ENCODE measurements at regions of chr2 and their contacts with region 1.

Region 1: GRCh38 chr2:136135921-136136906 is 18.3 kb upstream of the CXCR4 start:
- DNase-seq: peak; percentile 59
- H3K4me3 Mint-ChIP-seq: peak overlapping the region; percentile 17
- H3K27ac Mint-ChIP-seq: peak overlapping the region; percentile 60
- H3K4me1 Mint-ChIP-seq: peaks cover 82% of the 10 kb centered on the region
- H3K27me3 Mint-ChIP-seq: peaks cover 30% of the 10 kb centered on the region

Region 2: GRCh38 chr2:135664623-135665068 is 471.6 kb before region 1 on chr2:
- intact Hi-C with region 1: loop called (anchors 10 kb)
- DNase-seq: no peak
- H3K4me3 Mint-ChIP-seq: no peak overlapping the region
- H3K27ac Mint-ChIP-seq: peak overlapping the region; percentile 71
- H3K4me1 Mint-ChIP-seq: peaks cover 37% of the 10 kb centered on the region
- H3K27me3 Mint-ChIP-seq: no peaks in the 10 kb centered on the region

Region 3: GRCh38 chr2:135820003-135820618 is 316.1 kb before region 1 on chr2:
- intact Hi-C with region 1: loop called (anchors 5 kb)
- DNase-seq: peak; percentile 75
- H3K4me3 Mint-ChIP-seq: peak overlapping the region; percentile 80
- H3K27ac Mint-ChIP-seq: peak overlapping the region; percentile 89
- H3K4me1 Mint-ChIP-seq: peaks cover 52% of the 10 kb centered on the region
- H3K27me3 Mint-ChIP-seq: no peaks in the 10 kb centered on the region

Region 4: GRCh38 chr2:135913727-135914365 is 222.4 kb before region 1 on chr2:
- intact Hi-C with region 1: loop called (anchors 1 kb)
- DNase-seq: no peak
- H3K4me3 Mint-ChIP-seq: no peak overlapping the region
- H3K27ac Mint-ChIP-seq: no peak overlapping the region
- H3K4me1 Mint-ChIP-seq: peaks cover 27% of the 10 kb centered on the region
- H3K27me3 Mint-ChIP-seq: no peaks in the 10 kb centered on the region

Region 5: DNA sequence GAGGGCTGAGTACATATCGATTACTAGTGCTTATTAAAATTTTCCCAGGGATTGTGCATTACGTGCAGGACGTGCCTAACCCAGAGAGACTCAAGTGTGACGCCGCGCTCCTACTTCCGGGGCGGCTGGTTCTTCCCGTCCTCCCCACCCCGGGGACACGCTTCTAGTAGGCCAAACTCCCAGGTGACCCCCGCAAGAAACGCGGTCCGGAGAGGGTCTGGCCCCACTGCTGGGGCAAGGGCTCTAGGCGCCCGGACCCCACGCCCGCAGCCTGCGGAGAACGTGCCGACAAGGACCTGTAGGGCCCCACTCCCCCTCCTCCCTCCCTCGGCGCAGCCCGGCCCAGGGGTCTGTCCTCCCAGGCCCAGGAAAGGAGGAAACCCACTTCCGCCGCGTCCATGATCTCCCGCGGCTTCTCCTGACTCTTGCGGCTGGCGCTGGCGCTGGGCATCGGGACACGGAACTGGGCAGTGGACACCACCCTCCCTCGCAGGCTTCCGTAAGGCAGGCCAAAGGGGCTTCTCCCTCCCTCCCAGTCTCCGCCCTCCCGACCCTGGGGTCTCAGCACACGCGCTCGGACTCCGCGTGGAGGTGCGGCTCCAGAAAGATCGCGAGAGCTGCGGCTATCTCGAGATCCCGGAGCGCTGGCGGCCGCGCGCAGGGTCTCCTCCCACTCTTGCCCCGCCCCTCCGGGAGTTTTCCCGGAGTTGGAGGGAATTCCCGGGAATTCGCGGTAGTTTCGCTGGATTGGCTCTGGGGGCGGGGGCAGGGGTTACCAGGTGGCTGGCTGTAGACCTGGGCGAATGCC is 151.0 kb before region 1 on chr2 and contains the start of gene DARS1:
- intact Hi-C with region 1: loop called (anchors 1 kb)
- DNase-seq: peak; percentile 78
- H3K4me3 Mint-ChIP-seq: peak within 1 kb of the TSS; percentile 91
- H3K27ac Mint-ChIP-seq: peak within 1 kb of the TSS; percentile 97
- H3K4me1 Mint-ChIP-seq: peaks cover 62% of the 10 kb centered on the region
- H3K27me3 Mint-ChIP-seq: no peaks in the 10 kb centered on the region
- total RNA-seq, gene DARS1: 132 and 140 TPM in 2 replicates

Region 6: GRCh38 chr2:136238286-136239078 is 102.3 kb after region 1 on chr2:
- intact Hi-C with region 1: loop called (anchors 1 kb)
- DNase-seq: peak; percentile 12
- H3K4me3 Mint-ChIP-seq: peak overlapping the region; percentile 27
- H3K27ac Mint-ChIP-seq: peak overlapping the region; percentile 88
- H3K4me1 Mint-ChIP-seq: peaks cover 49% of the 10 kb centered on the region
- H3K27me3 Mint-ChIP-seq: no peaks in the 10 kb centered on the region

Region 7: GRCh38 chr2:136362676-136363390 is 226.6 kb after region 1 on chr2:
- intact Hi-C with region 1: loop called (anchors 1 kb)
- DNase-seq: no peak
- H3K4me3 Mint-ChIP-seq: peak overlapping the region; percentile 21
- H3K27ac Mint-ChIP-seq: peak overlapping the region; percentile 69
- H3K4me1 Mint-ChIP-seq: peaks cover 57% of the 10 kb centered on the region
- H3K27me3 Mint-ChIP-seq: peaks cover 4% of the 10 kb centered on the region

Region 8: DNA sequence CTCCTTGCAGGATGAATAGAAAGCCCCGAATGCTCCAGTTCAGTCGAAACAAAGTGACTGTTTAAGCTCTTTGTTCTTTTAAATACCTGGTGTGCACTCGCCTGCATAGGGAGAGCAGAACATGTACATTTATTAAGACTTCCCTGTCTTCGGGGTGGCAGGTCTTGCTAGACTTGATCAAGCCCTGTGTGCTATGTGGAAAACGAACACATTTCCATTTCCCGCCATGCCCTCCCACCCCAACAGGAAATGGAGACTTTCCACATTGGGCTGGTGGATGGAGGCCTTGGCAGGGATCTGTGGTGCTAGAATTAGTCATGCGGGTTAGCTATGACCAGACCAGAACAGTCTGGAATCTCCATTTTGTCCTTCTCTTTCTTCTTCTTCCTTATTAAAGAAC is 308.1 kb after region 1 on chr2:
- intact Hi-C with region 1: no loop called
- DNase-seq: no peak
- H3K4me3 Mint-ChIP-seq: no peak overlapping the region
- H3K27ac Mint-ChIP-seq: no peak overlapping the region
- H3K4me1 Mint-ChIP-seq: no peaks in the 10 kb centered on the region
- H3K27me3 Mint-ChIP-seq: peaks cover 1% of the 10 kb centered on the region

Measured in activated T-helper 1 cell treated with anti-CD3 and anti-CD28 coated beads, Interleukin-12 subunit alpha, Interleukin-12 subunit beta, Interleukin-2, Interleukin-4 antibody, amounts not matched to agents 30 ng/mL and 10 ng/mL and 1 ng/mL, durations not matched to agents 14 hours and 24 hours and 36 hours (primary cell).